GM18951 (cell line): ENCODE measurements at regions of chr5 and their contacts with region 1.

Region 1: GRCh38 chr5:172984243-172984953 is 827 bp downstream of the ATP6V0E1 start:
- POLR2A ChIP-seq: no peak

Region 2: GRCh38 chr5:172078726-172079345 is 905.6 kb before region 1 on chr5:
- in situ Hi-C with region 1: no loop called
- POLR2A ChIP-seq: no peak

Region 3: GRCh38 chr5:172886974-172887501 is 97.4 kb before region 1 on chr5:
- in situ Hi-C with region 1: no loop called
- POLR2A ChIP-seq: no peak

Region 4: GRCh38 chr5:173144200-173145176 is 160.1 kb after region 1 on chr5 and contains the start of gene BNIP1:
- in situ Hi-C with region 1: loop called (anchors 10 kb)
- POLR2A ChIP-seq: peak; percentile 70

Region 5: GRCh38 chr5:173331956-173332479 is 347.6 kb after region 1 on chr5:
- in situ Hi-C with region 1: loop called (anchors 25 kb)
- POLR2A ChIP-seq: peak; percentile 30